ENCODE measurements at regions of chr1 and their contacts with region 1.

Region 1: DNA sequence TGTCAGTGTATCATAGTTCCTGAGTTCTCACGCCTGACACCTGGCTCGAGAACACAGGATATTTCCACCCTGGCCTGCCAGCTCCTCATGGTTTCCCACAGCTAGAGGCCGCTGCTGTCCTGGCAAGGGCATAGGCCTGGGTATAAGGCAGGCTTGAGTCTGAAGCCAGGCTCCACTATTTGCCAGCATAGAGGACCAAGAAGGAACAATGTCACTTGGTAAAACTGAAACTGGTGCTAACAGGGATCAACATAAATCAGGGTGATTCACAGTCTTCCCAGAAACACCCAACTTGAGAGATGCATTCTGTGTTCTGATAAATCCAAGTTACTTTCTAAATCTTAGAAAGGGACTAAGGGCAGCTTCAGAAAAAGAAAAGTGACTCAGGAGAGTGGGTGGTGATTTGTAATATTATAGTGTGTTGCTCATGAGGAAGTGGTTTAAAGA is 6.9 kb upstream of the S100A2 start:
- DNase-seq: peak; percentile 84
- H3K4me3 Mint-ChIP-seq: no peak overlapping the region
- H3K27ac Mint-ChIP-seq: peak overlapping the region; percentile 72
- H3K4me1 Mint-ChIP-seq: peaks cover 37% of the 10 kb centered on the region
- H3K27me3 Mint-ChIP-seq: peaks cover 8% of the 10 kb centered on the region

Region 2: DNA sequence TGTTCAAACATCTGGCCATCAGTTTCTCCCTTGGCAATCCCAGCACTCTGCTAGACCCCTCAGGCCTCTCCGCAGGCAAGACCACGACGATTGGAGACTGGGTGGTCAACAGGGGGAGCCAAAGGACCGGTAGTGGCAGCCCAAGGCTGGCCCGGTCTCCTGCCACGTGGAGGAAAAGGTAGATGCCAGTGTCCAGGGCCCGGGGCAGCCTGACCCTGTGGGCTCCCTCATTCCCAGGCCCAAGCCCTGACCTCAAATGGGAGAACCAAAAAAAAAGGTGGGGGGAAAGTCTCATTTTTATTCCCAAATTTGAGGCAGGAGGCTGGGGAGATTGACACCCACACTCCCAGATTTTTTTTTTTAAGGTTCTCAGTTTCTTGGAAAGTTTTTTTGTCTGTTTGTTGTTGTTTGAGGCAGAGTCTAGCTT is 61.6 kb before region 1 on chr1:
- intact Hi-C with region 1: loop called (anchors 1 kb)
- DNase-seq: peak; percentile 94
- H3K4me3 Mint-ChIP-seq: no peak overlapping the region
- H3K27ac Mint-ChIP-seq: peak overlapping the region; percentile 80
- H3K4me1 Mint-ChIP-seq: peaks cover 21% of the 10 kb centered on the region
- H3K27me3 Mint-ChIP-seq: no peaks in the 10 kb centered on the region

Region 3: DNA sequence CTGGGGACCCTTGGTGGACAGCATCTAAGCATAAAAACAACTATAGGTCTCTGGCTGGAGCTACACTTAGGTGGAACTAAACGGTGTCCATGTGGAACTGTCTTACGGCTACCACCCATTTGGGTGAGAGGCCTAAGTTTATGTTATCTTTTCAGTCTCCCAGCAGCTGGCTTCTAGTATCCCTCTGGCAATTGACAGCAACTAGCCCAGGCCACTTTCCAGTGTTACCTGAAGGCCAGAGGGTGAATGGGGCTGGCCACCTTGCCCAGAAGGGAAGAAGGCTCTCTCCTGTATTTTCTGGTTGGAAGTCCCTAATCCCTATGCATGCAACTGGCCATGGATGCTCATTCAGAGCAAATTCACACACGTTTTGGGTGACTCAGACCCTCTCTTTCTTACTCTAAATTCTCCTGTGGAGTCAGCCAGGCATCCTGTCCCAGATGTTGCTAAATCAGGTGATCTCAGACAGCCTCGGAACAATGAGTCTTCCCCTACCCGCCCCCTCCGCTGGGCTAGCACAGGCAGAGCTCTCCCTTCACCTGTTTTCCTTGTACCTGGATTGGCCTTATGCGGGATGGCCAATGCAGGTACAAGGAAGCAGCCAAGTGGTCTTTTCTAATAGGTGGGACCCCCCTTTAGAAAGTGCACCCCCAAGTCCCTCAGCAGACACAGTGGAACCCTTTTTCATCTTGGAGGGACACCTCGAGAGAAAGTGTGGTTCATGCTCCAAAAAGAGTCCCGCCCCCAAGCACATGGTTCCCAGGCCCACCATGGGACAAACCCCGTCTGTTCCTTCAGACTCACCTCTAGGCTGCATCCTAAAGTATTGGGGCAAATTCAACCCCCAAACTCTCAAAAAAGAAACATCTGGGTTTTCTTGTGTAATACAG is 45.6 kb before region 1 on chr1:
- intact Hi-C with region 1: no loop called
- DNase-seq: no peak
- H3K4me3 Mint-ChIP-seq: no peak overlapping the region
- H3K27ac Mint-ChIP-seq: no peak overlapping the region
- H3K4me1 Mint-ChIP-seq: peaks cover 18% of the 10 kb centered on the region
- H3K27me3 Mint-ChIP-seq: no peaks in the 10 kb centered on the region

Region 4: DNA sequence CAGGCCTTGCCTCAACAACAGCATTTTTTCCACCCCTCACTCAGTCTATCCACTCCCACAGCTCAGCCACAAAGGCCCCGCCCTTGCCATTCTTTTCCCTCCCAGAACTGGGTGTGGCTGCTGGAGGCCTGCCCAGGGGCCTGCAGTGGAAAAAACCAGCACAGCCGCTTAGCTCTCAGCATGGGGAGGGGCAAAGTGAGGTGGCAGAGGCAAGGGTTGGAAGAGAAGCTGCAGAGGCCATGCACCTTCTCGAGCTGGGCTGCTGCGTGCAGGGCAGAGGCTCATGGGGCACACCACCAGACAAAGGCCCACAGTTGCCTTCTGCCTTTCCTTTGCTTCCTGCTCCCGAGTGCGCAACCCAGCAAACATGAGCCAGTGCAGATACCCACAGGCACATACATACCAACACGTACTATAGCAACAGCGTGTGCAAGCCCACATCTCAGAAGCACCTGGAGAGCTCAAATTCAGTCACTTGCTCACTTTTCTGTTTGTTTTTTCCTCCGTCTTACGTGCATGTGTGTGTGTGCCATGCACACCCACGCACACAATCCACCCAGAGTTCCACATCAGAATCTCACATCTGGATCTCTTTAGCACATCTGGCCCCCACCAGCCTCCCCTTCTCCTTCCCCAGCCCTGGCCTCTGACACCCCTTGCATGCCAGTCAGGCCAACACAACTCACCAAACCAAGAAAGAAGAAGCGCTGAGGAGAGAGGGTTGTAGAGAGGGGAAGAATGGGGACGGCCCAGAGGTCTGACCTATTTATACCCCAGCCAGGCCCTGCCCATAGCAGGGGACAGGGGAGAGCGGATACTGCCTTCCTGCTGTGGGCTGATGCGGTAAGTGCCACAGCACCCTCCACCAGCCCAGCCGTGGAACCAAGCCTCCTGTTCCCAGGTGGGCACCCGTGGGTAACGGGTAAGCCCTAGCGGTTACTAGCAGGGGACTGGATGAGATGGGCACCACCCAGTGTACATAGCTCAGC is 27.2 kb before region 1 on chr1 and contains the start of gene S100A4:
- intact Hi-C with region 1: loop called (anchors 1 kb)
- DNase-seq: peak; percentile 99
- H3K4me3 Mint-ChIP-seq: peak within 1 kb of the TSS; percentile 95
- H3K27ac Mint-ChIP-seq: peak within 1 kb of the TSS; percentile 99
- H3K4me1 Mint-ChIP-seq: peaks cover 76% of the 10 kb centered on the region
- H3K27me3 Mint-ChIP-seq: no peaks in the 10 kb centered on the region
- total RNA-seq, gene S100A4: 132 and 134 TPM in 2 replicates

Region 5: GRCh38 chr1:153617675-153618074 is 45.1 kb after region 1 on chr1:
- intact Hi-C with region 1: loop called (anchors 1 kb)
- DNase-seq: peak; percentile 93
- H3K4me3 Mint-ChIP-seq: no peak overlapping the region
- H3K27ac Mint-ChIP-seq: no peak overlapping the region
- H3K4me1 Mint-ChIP-seq: peaks cover 8% of the 10 kb centered on the region
- H3K27me3 Mint-ChIP-seq: no peaks in the 10 kb centered on the region

Region 6: DNA sequence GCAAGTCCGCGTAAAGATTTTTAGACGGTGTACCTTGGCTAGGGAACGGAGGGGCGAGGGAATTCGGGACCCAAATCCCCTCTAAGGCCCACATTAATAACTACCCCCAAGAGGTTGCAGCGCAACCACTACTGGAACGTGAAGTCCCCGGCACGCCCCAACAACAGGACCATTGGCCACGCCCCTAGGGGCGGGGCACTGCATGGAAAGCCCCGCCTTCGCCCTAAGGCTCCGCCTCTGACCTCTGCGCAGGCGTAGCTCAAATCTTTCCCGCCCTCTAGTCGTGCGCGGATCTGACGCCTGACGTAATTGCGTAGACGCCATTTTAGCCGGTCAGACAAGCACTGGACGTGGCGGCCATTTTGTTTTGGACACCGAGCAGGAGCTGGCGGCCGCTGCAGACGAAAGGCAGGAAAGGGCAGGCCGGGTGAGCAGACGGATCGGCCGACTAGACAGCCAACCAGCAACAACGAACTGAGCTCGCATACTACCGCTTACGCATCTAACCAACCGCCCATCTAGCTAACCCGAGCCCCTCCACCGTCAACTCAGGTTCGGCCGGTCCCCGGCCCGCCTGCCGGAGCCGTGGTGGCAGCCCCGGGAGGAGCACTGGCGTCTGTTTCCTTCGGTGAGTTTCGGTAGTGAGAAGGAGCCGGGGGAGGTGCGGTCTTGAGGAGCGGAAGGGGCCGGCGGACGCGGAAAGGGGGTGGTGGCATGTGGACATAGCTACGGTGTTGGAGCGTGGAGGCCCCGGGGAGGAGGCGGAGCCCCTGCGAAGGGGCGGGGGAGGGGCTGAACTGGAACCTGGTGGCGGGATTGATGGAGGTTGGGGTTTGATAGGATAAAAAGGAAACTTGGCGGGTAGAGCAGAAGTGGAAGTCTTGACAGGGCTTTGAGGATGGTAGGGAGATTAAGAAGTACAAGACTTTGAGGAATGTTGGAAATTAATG is 61.4 kb after region 1 on chr1 and contains the start of gene CHTOP:
- intact Hi-C with region 1: loop called (anchors 5 kb)
- DNase-seq: peak; percentile 99
- H3K4me3 Mint-ChIP-seq: peak within 1 kb of the TSS; percentile 91
- H3K27ac Mint-ChIP-seq: peak within 1 kb of the TSS; percentile 100
- H3K4me1 Mint-ChIP-seq: peaks cover 34% of the 10 kb centered on the region
- H3K27me3 Mint-ChIP-seq: no peaks in the 10 kb centered on the region
- total RNA-seq, gene CHTOP: 110 and 114 TPM in 2 replicates

Measured in activated CD4-positive, alpha-beta T cell treated with anti-CD3 and anti-CD28 coated beads, Interleukin-2, amount 10 ng/mL, durations not matched to agents 24 days and 14 days (primary cell).